ENCODE measurements at regions of chr9 and their contacts with region 1.

Region 1: DNA sequence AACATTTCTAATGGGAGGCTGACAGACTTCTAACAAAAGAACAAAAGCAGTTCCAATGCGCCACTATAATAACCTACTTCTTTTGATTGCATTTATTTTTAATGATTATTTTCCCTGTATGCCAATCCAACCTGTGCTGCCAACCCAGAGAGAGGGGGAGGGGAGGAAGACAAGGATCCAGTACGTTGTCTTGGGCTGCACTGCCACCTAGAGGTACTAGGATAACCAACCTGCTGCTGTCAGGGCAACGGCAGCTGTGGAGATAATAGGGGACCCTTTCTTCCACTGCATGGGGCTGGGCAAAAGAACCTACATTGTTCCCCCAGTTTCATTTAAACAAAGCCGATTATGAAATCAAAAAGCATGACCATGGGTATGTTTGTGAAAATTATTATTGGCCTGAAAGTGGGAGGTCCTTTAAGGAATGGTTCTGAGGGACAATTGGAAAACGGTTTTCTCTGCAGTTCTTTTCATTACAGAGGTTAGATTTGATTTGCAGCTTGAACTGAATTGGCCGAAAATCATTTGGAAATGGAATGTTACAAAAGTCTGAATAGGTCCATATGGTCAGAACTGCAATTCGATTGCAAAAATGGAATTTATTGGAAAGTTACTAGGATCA is 101.3 kb downstream of the RASEF start:
- DNase-seq: peak; percentile 62 to 80
- ATAC-seq: peak; percentile 95 to 96
- H3K4me3 ChIP-seq: no peak overlapping the region
- H3K27ac ChIP-seq: peak overlapping the region in 1 of 2 experiments; percentile 62; a peak in 3 of 6 replicates
- H3K4me1 ChIP-seq: peaks cover 6% of the 10 kb centered on the region; the same call in 1 of the 3 replicates
- CTCF ChIP-seq: peak; percentile 81
- EP300 ChIP-seq: no peak
- POLR2A ChIP-seq: no peak
- RAD21 ChIP-seq: peak; percentile 98 to 99

Region 2: GRCh38 chr9:82972446-82972845 is 10.8 kb after region 1 on chr9:
- CTCF ChIA-PET with region 1: interaction called, 12 read pairs
- POLR2A ChIA-PET with region 1: no interaction called
- DNase-seq: no peak
- ATAC-seq: no peak
- H3K4me3 ChIP-seq: no peak overlapping the region
- H3K27ac ChIP-seq: no peak overlapping the region
- H3K4me1 ChIP-seq: no peaks in the 10 kb centered on the region
- CTCF ChIP-seq: no peak
- EP300 ChIP-seq: no peak
- POLR2A ChIP-seq: no peak
- RAD21 ChIP-seq: no peak

Region 3: DNA sequence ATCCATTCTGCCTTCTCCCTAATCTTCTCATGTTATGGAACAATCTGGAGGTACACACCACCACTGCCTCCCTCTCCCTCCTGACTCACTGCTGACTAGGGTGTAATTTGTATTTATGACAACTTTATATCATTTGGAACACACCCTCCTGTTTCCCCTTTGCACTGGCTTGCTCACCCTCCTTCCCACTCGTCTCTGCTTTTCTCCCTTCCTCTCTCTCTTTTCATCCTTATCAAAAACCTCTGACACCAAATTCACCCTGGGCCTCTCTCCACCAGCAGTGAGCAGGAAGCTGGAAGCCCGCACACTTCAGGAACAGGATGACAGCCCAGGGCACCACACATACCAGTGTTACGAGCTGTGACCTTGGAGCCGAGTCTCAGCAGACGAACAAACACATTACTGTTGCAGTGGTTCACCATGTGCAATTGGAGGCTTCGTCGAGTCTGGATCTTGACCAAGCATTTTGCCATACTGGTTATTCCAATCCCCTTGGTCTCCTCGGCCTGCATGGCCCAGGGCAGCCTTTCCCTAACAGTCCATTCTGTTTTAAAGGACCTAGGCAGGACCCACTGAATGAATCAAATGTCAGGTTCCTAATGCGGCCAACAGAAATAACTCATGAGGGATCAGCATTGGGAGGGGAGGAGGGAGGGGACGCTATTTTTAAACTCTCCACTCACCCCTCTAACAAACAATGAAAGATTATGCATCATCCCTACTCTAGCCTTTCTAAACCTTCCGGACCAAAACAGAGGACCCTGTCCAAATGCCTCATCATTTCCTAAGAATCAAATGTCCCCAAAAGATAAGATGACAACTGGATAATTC is 305.3 kb after region 1 on chr9:
- CTCF ChIA-PET with region 1: no interaction called
- POLR2A ChIA-PET with region 1: no interaction called
- DNase-seq: no peak
- ATAC-seq: peak in 1 of 2 experiments; percentile 34; a peak in 1 of 6 replicates
- H3K4me3 ChIP-seq: no peak overlapping the region
- H3K27ac ChIP-seq: no peak overlapping the region
- H3K4me1 ChIP-seq: peaks cover 5% of the 10 kb centered on the region; the same call in 2 of the 3 replicates
- CTCF ChIP-seq: no peak
- EP300 ChIP-seq: no peak
- POLR2A ChIP-seq: no peak
- RAD21 ChIP-seq: no peak

Measured in A549 (cell line).